ENCODE measurements at regions of chr5 and their contacts with region 1.

Region 1: GRCh38 chr5:334903-335739 is 13.6 kb downstream of the AHRR start:
- DNase-seq: no peak
- H3K4me3 Mint-ChIP-seq: peak overlapping the region; percentile 65
- H3K27ac Mint-ChIP-seq: peak overlapping the region; percentile 83
- H3K4me1 Mint-ChIP-seq: peaks cover 53% of the 10 kb centered on the region
- H3K27me3 Mint-ChIP-seq: no peaks in the 10 kb centered on the region

Region 2: DNA sequence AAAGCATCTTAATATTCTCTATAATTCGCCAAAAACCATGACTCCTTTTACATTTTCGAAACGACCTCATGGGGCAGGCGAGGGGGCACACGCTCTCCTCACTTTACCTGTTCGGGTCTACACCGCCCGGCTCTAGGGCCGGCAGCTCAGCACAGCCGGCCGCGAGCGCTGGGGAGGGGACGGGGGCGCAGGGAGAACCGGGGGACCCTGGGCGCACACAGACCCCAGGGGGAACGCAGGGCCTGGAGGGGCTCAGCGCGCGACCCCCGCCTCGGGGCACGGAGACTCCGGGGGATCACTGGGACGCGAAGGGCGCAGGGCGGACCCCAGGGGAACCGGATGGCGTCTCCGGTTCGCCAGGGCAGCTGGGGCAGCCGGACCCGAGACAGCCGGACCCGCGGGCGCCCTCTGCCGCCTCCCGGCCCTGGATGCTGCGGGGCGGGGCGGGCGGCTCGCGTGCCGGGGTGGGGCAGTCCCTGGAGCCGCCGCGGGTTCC is 13.8 kb before region 1 on chr5 and contains the start of gene AHRR:
- intact Hi-C with region 1: loop called (anchors 1 kb)
- DNase-seq: peak; percentile 64
- H3K4me3 Mint-ChIP-seq: peak within 1 kb of the TSS; percentile 83
- H3K27ac Mint-ChIP-seq: peak within 1 kb of the TSS; percentile 44
- H3K4me1 Mint-ChIP-seq: peaks cover 14% of the 10 kb centered on the region
- H3K27me3 Mint-ChIP-seq: peaks cover 11% of the 10 kb centered on the region
- total RNA-seq, gene AHRR: 22.7 and 23.7 TPM in 2 replicates

Region 3: GRCh38 chr5:378301-378891 is 43.3 kb after region 1 on chr5:
- intact Hi-C with region 1: loop called (anchors 1 kb)
- DNase-seq: peak; percentile 40
- H3K4me3 Mint-ChIP-seq: peak overlapping the region; percentile 72
- H3K27ac Mint-ChIP-seq: peak overlapping the region; percentile 91
- H3K4me1 Mint-ChIP-seq: peaks cover 71% of the 10 kb centered on the region
- H3K27me3 Mint-ChIP-seq: no peaks in the 10 kb centered on the region

Region 4: GRCh38 chr5:411728-412127 is 76.6 kb after region 1 on chr5:
- intact Hi-C with region 1: loop called (anchors 5 kb)
- DNase-seq: no peak
- H3K4me3 Mint-ChIP-seq: no peak overlapping the region
- H3K27ac Mint-ChIP-seq: no peak overlapping the region
- H3K4me1 Mint-ChIP-seq: peaks cover 14% of the 10 kb centered on the region
- H3K27me3 Mint-ChIP-seq: no peaks in the 10 kb centered on the region

Region 5: DNA sequence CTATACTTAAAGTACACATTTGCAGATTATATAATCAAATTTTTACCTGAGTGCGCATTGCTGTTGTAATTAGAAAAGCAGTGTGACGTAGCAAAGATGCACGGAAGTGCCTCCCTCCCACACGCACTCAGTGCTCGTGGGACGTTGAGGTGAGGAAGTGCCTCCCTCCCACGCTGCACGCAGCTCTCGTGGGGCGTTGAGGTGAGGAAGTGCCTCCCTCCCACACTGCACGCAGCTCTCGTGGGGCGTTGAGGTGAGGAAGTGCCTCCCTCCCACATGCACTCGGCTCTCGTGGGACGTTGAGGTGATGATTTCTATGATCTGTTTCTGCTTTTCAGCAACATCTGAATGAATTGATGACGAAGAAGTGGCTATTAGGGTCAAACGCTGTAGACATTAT is 128.8 kb after region 1 on chr5:
- intact Hi-C with region 1: loop called (anchors 5 kb)
- DNase-seq: peak; percentile 61
- H3K4me3 Mint-ChIP-seq: peak overlapping the region; percentile 47
- H3K27ac Mint-ChIP-seq: peak overlapping the region; percentile 71
- H3K4me1 Mint-ChIP-seq: peaks cover 51% of the 10 kb centered on the region
- H3K27me3 Mint-ChIP-seq: no peaks in the 10 kb centered on the region

Measured in activated T-helper 1 cell treated with anti-CD3 and anti-CD28 coated beads, Interleukin-12 subunit alpha, Interleukin-12 subunit beta, Interleukin-2, Interleukin-4 antibody, amounts not matched to agents 30 ng/mL and 10 ng/mL and 1 ng/mL, durations not matched to agents 14 hours and 24 hours and 36 hours (primary cell).